Heart left ventricle (tissue), 16 donors: ENCODE measurements at regions of chr9 and their contacts with region 1.

Region 1: DNA sequence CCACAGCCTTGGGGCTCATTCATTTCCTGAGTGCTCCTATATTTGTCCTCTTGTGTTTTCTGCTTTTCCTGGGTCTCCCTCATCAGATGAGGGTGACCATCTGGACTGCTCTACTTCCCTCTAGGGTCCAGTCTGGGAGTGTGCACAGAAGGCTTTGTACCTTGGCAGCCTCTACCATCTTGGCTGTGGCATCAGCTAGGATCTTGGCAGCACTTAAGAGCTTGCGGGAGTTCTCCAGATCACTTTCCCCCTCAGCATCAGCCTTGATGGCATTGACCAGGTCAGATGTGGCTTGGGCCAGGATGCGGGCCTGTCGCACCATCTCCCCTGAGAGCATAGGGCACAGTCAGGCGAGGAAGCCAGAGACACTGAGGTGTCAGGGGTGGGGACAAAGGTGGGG is 15.8 kb downstream of the TLN1 start:
- DNase-seq: no peak
- ATAC-seq: peak in 2 of 4 donors; percentile 3 to 10
- H3K4me3 ChIP-seq: no peak overlapping the region
- H3K27ac ChIP-seq: no peak overlapping the region
- H3K4me1 ChIP-seq: peaks cover 0 to 3% (median 0%) of the 10 kb centered on the region in 12 donors
- H3K27me3 ChIP-seq: no peaks in the 10 kb centered on the region
- CTCF ChIP-seq: no peak
- POLR2A ChIP-seq: no peak

Region 2: DNA sequence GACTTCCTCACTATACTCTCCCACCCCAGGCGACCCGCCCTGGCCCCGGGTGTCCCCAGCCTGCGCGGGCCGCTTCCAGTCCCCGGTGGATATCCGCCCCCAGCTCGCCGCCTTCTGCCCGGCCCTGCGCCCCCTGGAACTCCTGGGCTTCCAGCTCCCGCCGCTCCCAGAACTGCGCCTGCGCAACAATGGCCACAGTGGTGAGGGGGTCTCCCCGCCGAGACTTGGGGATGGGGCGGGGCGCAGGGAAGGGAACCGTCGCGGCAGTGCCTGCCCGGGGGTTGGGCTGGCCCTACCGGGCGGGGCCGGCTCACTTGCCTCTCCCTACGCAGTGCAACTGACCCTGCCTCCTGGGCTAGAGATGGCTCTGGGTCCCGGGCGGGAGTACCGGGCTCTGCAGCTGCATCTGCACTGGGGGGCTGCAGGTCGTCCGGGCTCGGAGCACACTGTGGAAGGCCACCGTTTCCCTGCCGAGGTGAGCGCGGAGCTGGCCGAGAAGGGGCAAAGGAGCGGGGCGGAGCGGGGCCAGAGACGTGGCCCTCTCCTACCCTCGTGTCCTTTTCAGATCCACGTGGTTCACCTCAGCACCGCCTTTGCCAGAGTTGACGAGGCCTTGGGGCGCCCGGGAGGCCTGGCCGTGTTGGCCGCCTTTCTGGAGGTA is 40.4 kb before region 1 on chr9:
- intact Hi-C with region 1: loop called in 1 of 10 experiments (anchors 5 kb)
- DNase-seq: peak in 3 of 5 donors; percentile 59 to 78 (median 60)
- ATAC-seq: peak in 3 of 4 donors; percentile 39 to 55 (median 47)
- H3K4me3 ChIP-seq: peak overlapping the region; percentile 27 to 65 (median 58)
- H3K27ac ChIP-seq: no peak overlapping the region
- H3K4me1 ChIP-seq: peaks cover 0 to 21% (median 11%) of the 10 kb centered on the region in 12 donors
- H3K27me3 ChIP-seq: peaks cover 0 to 8% (median 0%) of the 10 kb centered on the region in 9 donors
- CTCF ChIP-seq: peak in 2 of 12 donors; percentile 16 to 17
- POLR2A ChIP-seq: no peak

Region 3: DNA sequence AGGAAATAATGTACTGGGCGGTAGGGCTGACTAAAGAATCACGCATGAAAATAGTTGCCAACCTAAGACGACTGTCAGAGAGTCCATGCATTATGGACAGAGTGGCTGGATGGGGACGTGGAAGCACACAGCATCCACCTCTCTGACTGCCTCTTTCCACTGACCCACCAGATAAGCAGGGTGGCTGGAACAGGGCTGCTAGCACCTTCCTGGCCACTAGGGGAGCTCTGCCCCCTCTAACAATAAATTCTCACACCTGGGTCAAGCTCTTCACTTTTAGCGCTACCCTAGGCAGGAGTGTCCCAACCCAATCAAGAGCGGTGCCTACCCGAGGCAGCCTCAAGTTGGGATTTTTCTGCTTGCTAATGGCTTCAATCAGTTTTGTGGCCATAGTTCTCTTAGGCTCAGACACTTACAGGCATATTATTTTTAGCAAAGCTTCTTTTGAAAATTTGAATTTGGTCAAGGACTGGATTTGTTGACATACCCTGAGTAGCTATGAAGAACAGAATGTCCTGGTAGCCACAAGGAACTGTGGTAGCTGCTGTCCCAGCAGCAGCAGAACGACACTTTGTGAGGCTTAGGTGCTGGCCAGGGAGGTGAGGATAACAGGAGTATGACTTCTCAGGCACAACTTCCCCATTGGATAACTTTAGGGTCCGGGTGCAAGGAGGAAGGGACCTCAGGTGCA is 19.6 kb before region 1 on chr9:
- intact Hi-C with region 1: loop called in 1 of 10 experiments (anchors 1 kb)
- DNase-seq: peak in 4 of 5 donors; percentile 44 to 59 (median 54)
- ATAC-seq: peak; percentile 49 to 75 (median 73)
- H3K4me3 ChIP-seq: no peak overlapping the region
- H3K27ac ChIP-seq: peak overlapping the region in 4 of 12 donors; percentile 14 to 98 (median 24)
- H3K4me1 ChIP-seq: peaks cover 0 to 13% (median 5%) of the 10 kb centered on the region in 12 donors
- H3K27me3 ChIP-seq: no peaks in the 10 kb centered on the region
- CTCF ChIP-seq: peak; percentile 82 to 94 (median 88)
- POLR2A ChIP-seq: no peak